Naive thymus-derived CD4-positive, alpha-beta T cell (primary cell): ENCODE measurements at regions of chr1 and their contacts with region 1.

Region 1: GRCh38 chr1:232630047-232630893 is at the start of gene SIPA1L2:
- DNase-seq: peak; percentile 66 to 95 (median 84)
- ATAC-seq: peak; percentile 96
- H3K4me3 ChIP-seq: peak within 1 kb of the TSS; percentile 58
- H3K4me3 Mint-ChIP-seq: peak within 1 kb of the TSS; percentile 82 to 91 (median 86)
- H3K27ac ChIP-seq: no peak within 1 kb of the TSS
- H3K27ac Mint-ChIP-seq: peak within 1 kb of the TSS in 2 of 9 donors; percentile 14 to 64
- H3K4me1 ChIP-seq: peaks cover 4 to 8% of the 10 kb centered on the region in 2 donors
- H3K4me1 Mint-ChIP-seq: peaks cover 14 to 30% (median 27%) of the 10 kb centered on the region in 7 donors
- H3K27me3 ChIP-seq: peaks cover 0 to 3% of the 10 kb centered on the region in 2 donors
- H3K27me3 Mint-ChIP-seq: peaks cover 11 to 59% (median 29%) of the 10 kb centered on the region in 5 donors
- total RNA-seq, gene SIPA1L2: 0.27 to 4.9 (median 0.69) TPM

Region 2: GRCh38 chr1:231357831-231358354 is 1272.4 kb before region 1 on chr1:
- CTCF ChIA-PET with region 1: no interaction called
- POLR2A ChIA-PET with region 1: no interaction called
- intact Hi-C with region 1: loop called in 1 of 2 experiments (anchors 5 kb)
- DNase-seq: peak in 7 of 9 donors; percentile 36 to 64 (median 55)
- ATAC-seq: peak; percentile 91
- H3K4me3 ChIP-seq: no peak overlapping the region
- H3K4me3 Mint-ChIP-seq: no peak overlapping the region
- H3K27ac ChIP-seq: no peak overlapping the region
- H3K27ac Mint-ChIP-seq: peak overlapping the region in 7 of 9 donors; percentile 3 to 63 (median 27)
- H3K4me1 ChIP-seq: peaks cover 0 to 3% of the 10 kb centered on the region in 2 donors
- H3K4me1 Mint-ChIP-seq: peaks cover 2 to 15% (median 7%) of the 10 kb centered on the region in 7 donors
- H3K27me3 ChIP-seq: no peaks in the 10 kb centered on the region
- H3K27me3 Mint-ChIP-seq: no peaks in the 10 kb centered on the region

Region 3: GRCh38 chr1:231803353-231803752 is 826.9 kb before region 1 on chr1:
- CTCF ChIA-PET with region 1: no interaction called
- POLR2A ChIA-PET with region 1: no interaction called
- intact Hi-C with region 1: no loop called
- DNase-seq: no peak
- ATAC-seq: peak; percentile 67
- H3K4me3 ChIP-seq: no peak overlapping the region
- H3K4me3 Mint-ChIP-seq: no peak overlapping the region
- H3K27ac ChIP-seq: no peak overlapping the region
- H3K27ac Mint-ChIP-seq: no peak overlapping the region
- H3K4me1 ChIP-seq: no peaks in the 10 kb centered on the region
- H3K4me1 Mint-ChIP-seq: peaks cover 0 to 12% (median 4%) of the 10 kb centered on the region in 7 donors
- H3K27me3 ChIP-seq: no peaks in the 10 kb centered on the region
- H3K27me3 Mint-ChIP-seq: no peaks in the 10 kb centered on the region

Region 4: DNA sequence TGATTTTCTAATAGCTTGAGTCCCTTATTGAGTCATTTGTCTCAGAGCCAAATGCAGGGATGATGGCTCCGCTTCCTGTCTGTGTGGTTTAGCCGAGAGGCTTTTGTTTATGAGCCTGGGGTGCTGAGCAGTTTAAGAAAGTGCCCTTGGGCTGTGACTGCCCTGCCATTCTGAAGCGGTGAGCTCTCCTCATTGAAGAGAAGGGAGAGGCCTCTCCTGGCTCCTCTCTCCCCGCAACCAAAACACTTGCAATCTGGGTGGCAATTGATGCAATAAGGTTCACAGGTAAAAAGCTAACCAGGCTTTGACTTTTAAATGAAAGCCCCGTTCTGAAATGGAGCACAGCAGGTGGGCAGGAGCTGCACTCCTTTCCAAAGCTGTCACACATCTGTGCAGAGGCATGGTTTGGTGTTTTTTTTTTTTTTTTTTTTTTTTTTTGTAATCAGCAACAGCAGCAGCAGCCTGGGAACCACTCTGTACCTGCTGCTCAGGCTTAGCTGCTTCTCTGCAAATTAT is 404.0 kb before region 1 on chr1:
- CTCF ChIA-PET with region 1: no interaction called
- POLR2A ChIA-PET with region 1: no interaction called
- intact Hi-C with region 1: loop called in 1 of 2 experiments (anchors 10 kb)
- DNase-seq: peak in 7 of 9 donors; percentile 1 to 32 (median 22)
- ATAC-seq: no peak
- H3K4me3 ChIP-seq: no peak overlapping the region
- H3K4me3 Mint-ChIP-seq: peak overlapping the region in 8 of 10 donors; percentile 13 to 67 (median 58)
- H3K27ac ChIP-seq: no peak overlapping the region
- H3K27ac Mint-ChIP-seq: peak overlapping the region in 6 of 9 donors; percentile 14 to 71 (median 51)
- H3K4me1 ChIP-seq: peaks cover 11% of the 10 kb centered on the region in 2 donors
- H3K4me1 Mint-ChIP-seq: peaks cover 7 to 24% (median 9%) of the 10 kb centered on the region in 7 donors
- H3K27me3 ChIP-seq: no peaks in the 10 kb centered on the region
- H3K27me3 Mint-ChIP-seq: peaks cover 0 to 10% (median 5%) of the 10 kb centered on the region in 5 donors

Region 5: DNA sequence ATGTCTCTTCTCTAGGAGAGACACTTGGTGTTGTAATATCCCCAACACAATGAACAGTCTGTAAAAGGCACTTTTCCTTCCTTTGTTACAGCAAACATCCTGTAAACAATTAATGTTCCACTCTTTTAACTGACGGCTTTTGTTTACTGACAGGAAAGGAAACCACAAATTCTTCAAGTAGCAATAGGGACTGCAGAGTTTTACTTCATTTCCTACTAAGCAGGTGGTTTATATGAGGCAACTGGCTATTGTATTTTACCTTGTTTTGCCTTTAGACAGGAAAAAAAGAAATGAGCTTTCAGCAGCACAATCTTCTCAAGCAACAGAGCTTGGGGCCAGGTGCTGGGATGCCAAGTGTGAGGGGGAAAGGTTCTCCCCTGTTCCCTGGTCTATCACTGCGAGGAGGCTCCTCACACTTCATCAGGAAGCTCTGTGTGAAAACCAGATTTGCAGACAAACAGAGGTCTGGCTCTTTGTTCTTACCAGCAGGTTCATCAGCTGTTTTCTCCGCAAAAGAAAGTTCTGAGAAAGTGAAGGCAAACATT is 51.5 kb before region 1 on chr1:
- CTCF ChIA-PET with region 1: interaction called, 3 read pairs
- POLR2A ChIA-PET with region 1: no interaction called
- intact Hi-C with region 1: loop called in 1 of 2 experiments (anchors 1 kb)
- DNase-seq: peak in 5 of 9 donors; percentile 14 to 52 (median 21)
- ATAC-seq: peak; percentile 59
- H3K4me3 ChIP-seq: peak overlapping the region; percentile 31
- H3K4me3 Mint-ChIP-seq: peak overlapping the region; percentile 42 to 79 (median 60)
- H3K27ac ChIP-seq: peak overlapping the region; percentile 18
- H3K27ac Mint-ChIP-seq: peak overlapping the region; percentile 15 to 90 (median 49)
- H3K4me1 ChIP-seq: peaks cover 21 to 27% of the 10 kb centered on the region in 2 donors
- H3K4me1 Mint-ChIP-seq: peaks cover 19 to 54% (median 29%) of the 10 kb centered on the region in 7 donors
- H3K27me3 ChIP-seq: no peaks in the 10 kb centered on the region
- H3K27me3 Mint-ChIP-seq: peaks cover 0 to 5% (median 0%) of the 10 kb centered on the region in 5 donors

Region 6: GRCh38 chr1:232684363-232685105 is 54.3 kb after region 1 on chr1:
- CTCF ChIA-PET with region 1: no interaction called
- POLR2A ChIA-PET with region 1: no interaction called
- intact Hi-C with region 1: no loop called
- DNase-seq: no peak
- ATAC-seq: no peak
- H3K4me3 ChIP-seq: no peak overlapping the region
- H3K4me3 Mint-ChIP-seq: no peak overlapping the region
- H3K27ac ChIP-seq: no peak overlapping the region
- H3K27ac Mint-ChIP-seq: no peak overlapping the region
- H3K4me1 ChIP-seq: no peaks in the 10 kb centered on the region
- H3K4me1 Mint-ChIP-seq: no peaks in the 10 kb centered on the region
- H3K27me3 ChIP-seq: peaks cover 0 to under 1% of the 10 kb centered on the region in 2 donors
- H3K27me3 Mint-ChIP-seq: peaks cover 0 to 11% (median 3%) of the 10 kb centered on the region in 5 donors

Region 7: DNA sequence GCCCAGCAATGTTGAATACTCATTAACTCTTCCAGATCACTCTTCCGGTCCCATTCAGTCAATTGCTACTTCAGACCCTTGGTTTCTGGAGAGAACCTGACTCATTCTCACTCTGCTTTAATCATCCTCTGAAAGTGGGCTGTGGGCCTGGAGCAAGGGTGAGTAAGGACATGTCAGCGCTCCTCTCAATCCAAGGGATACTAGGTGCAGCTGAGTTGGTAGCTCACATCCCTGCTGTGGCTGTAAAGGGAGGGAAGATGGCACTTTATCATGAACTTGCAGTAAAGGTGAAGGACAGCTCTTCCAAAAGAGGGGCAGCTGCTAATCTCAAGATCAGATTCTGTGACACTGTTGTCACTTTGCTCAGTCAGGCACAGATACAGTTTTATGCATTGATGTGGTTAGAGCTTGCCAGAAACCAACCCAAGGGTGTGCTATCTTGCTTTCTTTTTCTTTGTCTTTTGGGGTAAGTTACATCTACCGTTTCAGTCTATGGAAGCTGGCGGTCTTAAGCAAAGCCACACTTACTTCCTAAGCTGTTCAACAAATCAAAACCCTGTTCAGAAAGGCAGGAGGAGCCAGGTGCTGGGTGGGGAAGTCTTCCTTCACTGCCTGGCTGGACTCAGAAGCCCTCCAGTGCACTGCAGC is 293.6 kb after region 1 on chr1:
- CTCF ChIA-PET with region 1: interaction called, 3 read pairs
- POLR2A ChIA-PET with region 1: no interaction called
- intact Hi-C with region 1: loop called (anchors 1 to 10 kb)
- DNase-seq: peak in 8 of 9 donors; percentile 46 to 90 (median 84)
- ATAC-seq: peak; percentile 96
- H3K4me3 ChIP-seq: no peak overlapping the region
- H3K4me3 Mint-ChIP-seq: peak overlapping the region; percentile 58 to 89 (median 80)
- H3K27ac ChIP-seq: peak overlapping the region; percentile 49
- H3K27ac Mint-ChIP-seq: peak overlapping the region; percentile 87 to 96 (median 93)
- H3K4me1 ChIP-seq: peaks cover 30 to 41% of the 10 kb centered on the region in 2 donors
- H3K4me1 Mint-ChIP-seq: peaks cover 36 to 64% (median 45%) of the 10 kb centered on the region in 7 donors
- H3K27me3 ChIP-seq: no peaks in the 10 kb centered on the region
- H3K27me3 Mint-ChIP-seq: no peaks in the 10 kb centered on the region

Region 8: DNA sequence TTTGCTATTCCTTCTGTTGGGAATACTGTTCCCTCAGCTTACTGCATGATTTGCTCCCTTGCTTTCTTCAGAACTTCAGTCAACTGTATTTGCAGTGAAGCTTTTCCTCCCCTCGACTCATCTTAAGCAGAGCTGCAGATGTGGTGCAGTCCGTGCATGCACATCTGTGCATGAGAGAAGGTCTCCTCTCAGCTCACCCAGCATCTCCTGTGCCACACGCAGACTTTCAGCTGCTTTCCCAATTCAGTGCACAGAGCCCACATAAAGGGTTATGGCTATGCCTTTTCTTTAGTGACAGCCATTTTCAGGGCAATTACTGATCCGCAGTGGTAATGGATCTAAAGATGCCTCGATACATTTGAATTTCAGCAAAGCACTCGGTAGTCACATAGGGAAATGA is 306.7 kb after region 1 on chr1:
- CTCF ChIA-PET with region 1: no interaction called
- POLR2A ChIA-PET with region 1: no interaction called
- intact Hi-C with region 1: no loop called
- DNase-seq: no peak
- ATAC-seq: no peak
- H3K4me3 ChIP-seq: no peak overlapping the region
- H3K4me3 Mint-ChIP-seq: no peak overlapping the region
- H3K27ac ChIP-seq: no peak overlapping the region
- H3K27ac Mint-ChIP-seq: no peak overlapping the region
- H3K4me1 ChIP-seq: no peaks in the 10 kb centered on the region
- H3K4me1 Mint-ChIP-seq: peaks cover 0 to 4% (median 0%) of the 10 kb centered on the region in 7 donors
- H3K27me3 ChIP-seq: no peaks in the 10 kb centered on the region
- H3K27me3 Mint-ChIP-seq: peaks cover 0 to 6% (median 0%) of the 10 kb centered on the region in 5 donors

Region 9: DNA sequence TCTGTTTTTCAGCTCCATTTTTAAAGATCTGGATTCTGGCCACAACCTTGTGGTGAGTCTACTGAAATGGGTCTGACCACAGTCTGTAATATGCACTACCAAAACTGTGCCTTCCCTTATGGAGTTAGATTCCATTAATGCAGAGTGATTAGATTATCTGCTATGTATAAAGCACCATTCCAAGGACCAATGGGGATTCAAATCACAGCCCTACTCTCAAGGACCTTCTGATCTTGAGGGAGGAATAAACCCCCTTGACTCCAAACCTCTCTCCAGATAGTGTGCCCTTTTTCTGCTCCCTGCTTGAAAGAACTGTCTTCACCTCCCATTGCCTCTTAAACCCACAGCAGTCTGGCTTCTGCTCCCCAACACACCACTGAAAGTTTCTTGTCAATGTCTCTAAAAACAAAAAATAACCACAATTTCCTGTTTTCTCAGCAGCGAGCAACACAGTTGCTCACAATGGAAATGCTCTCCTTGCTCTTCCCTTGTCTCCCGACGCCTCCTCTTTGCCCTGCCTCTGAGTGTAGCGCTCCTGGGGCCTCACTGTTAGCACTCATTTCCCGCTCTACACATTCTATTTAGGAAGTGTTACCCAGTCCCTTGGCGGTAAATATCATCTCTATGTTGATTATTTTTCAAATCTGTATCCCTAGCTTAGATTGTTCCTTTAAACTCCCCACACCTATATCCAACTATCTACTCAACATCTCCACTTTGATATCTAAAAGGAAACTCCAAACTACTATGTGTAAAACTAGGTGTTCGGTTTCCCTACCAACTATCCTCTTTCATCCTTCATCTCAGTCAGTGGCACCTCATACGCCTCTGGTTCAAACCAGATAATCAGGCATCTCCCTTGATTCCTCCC is 651.7 kb after region 1 on chr1:
- CTCF ChIA-PET with region 1: no interaction called
- POLR2A ChIA-PET with region 1: no interaction called
- intact Hi-C with region 1: loop called in 1 of 2 experiments (anchors 5 kb)
- DNase-seq: peak in 6 of 9 donors; percentile 21 to 44 (median 38)
- ATAC-seq: peak; percentile 76
- H3K4me3 ChIP-seq: no peak overlapping the region
- H3K4me3 Mint-ChIP-seq: peak overlapping the region; percentile 58 to 80 (median 67)
- H3K27ac ChIP-seq: no peak overlapping the region
- H3K27ac Mint-ChIP-seq: peak overlapping the region; percentile 66 to 89 (median 76)
- H3K4me1 ChIP-seq: peaks cover 18 to 20% of the 10 kb centered on the region in 2 donors
- H3K4me1 Mint-ChIP-seq: peaks cover 24 to 53% (median 30%) of the 10 kb centered on the region in 7 donors
- H3K27me3 ChIP-seq: no peaks in the 10 kb centered on the region
- H3K27me3 Mint-ChIP-seq: no peaks in the 10 kb centered on the region